Calu3 (cell line): ENCODE measurements at regions of chr21 and their contacts with region 1.

Region 1: DNA sequence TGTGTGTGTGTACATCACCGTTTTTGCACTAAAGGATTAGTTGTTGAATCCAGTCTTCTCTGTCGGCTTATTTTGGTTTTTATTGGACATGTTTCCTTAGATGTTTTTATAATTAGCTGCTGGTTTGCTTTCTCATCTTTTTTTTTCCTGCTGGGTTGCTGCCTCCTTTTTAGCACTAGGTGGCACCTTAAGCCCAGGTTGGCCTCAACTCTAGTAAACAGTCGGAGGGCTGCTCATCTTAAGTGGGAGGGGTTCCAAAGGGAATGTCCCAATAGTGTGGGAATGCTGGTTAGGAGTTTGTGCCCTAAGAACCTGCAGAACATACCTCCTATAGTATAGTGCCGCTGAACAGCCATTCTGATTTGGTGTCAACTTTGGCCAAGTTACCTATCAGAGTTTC is 570.1 kb upstream of the CXADR start:
- DNase-seq: peak; percentile 13
- H3K4me3 Mint-ChIP-seq: no peak overlapping the region
- H3K27ac Mint-ChIP-seq: no peak overlapping the region
- H3K4me1 Mint-ChIP-seq: no peaks in the 10 kb centered on the region
- H3K27me3 Mint-ChIP-seq: no peaks in the 10 kb centered on the region
- CTCF ChIP-seq: peak; percentile 60

Region 2: GRCh38 chr21:16928439-16928838 is 14.3 kb before region 1 on chr21:
- CTCF ChIA-PET with region 1: no interaction called
- intact Hi-C with region 1: no loop called
- DNase-seq: no peak
- H3K4me3 Mint-ChIP-seq: no peak overlapping the region
- H3K27ac Mint-ChIP-seq: no peak overlapping the region
- H3K4me1 Mint-ChIP-seq: no peaks in the 10 kb centered on the region
- H3K27me3 Mint-ChIP-seq: no peaks in the 10 kb centered on the region
- CTCF ChIP-seq: no peak

Region 3: GRCh38 chr21:17045214-17045853 is 102.6 kb after region 1 on chr21:
- CTCF ChIA-PET with region 1: no interaction called
- intact Hi-C with region 1: loop called (anchors 5 kb)
- DNase-seq: no peak
- H3K4me3 Mint-ChIP-seq: no peak overlapping the region
- H3K27ac Mint-ChIP-seq: no peak overlapping the region
- H3K4me1 Mint-ChIP-seq: peaks cover 22% of the 10 kb centered on the region
- H3K27me3 Mint-ChIP-seq: no peaks in the 10 kb centered on the region
- CTCF ChIP-seq: peak; percentile 25

Region 4: GRCh38 chr21:17146431-17146830 is 203.7 kb after region 1 on chr21:
- CTCF ChIA-PET with region 1: no interaction called
- intact Hi-C with region 1: loop called (anchors 2 kb)
- DNase-seq: no peak
- H3K4me3 Mint-ChIP-seq: no peak overlapping the region
- H3K27ac Mint-ChIP-seq: no peak overlapping the region
- H3K4me1 Mint-ChIP-seq: no peaks in the 10 kb centered on the region
- H3K27me3 Mint-ChIP-seq: no peaks in the 10 kb centered on the region
- CTCF ChIP-seq: no peak

Region 5: GRCh38 chr21:17191346-17191993 is 248.8 kb after region 1 on chr21:
- CTCF ChIA-PET with region 1: no interaction called
- intact Hi-C with region 1: no loop called
- DNase-seq: no peak
- H3K4me3 Mint-ChIP-seq: no peak overlapping the region
- H3K27ac Mint-ChIP-seq: no peak overlapping the region
- H3K4me1 Mint-ChIP-seq: no peaks in the 10 kb centered on the region
- H3K27me3 Mint-ChIP-seq: no peaks in the 10 kb centered on the region
- CTCF ChIP-seq: no peak

Region 6: GRCh38 chr21:17270229-17270628 is 327.5 kb after region 1 on chr21:
- CTCF ChIA-PET with region 1: no interaction called
- intact Hi-C with region 1: loop called (anchors 2 kb)
- DNase-seq: no peak
- H3K4me3 Mint-ChIP-seq: no peak overlapping the region
- H3K27ac Mint-ChIP-seq: no peak overlapping the region
- H3K4me1 Mint-ChIP-seq: no peaks in the 10 kb centered on the region
- H3K27me3 Mint-ChIP-seq: peaks cover 16% of the 10 kb centered on the region
- CTCF ChIP-seq: peak; percentile 13